ENCODE measurements at regions of chr17 and their contacts with region 1.

Region 1: GRCh38 chr17:32486111-32486700 is 587 bp upstream of the CDK5R1 start:
- DNase-seq: peak; percentile 60
- H3K4me3 Mint-ChIP-seq: peak overlapping the region; percentile 79
- H3K27ac Mint-ChIP-seq: peak overlapping the region; percentile 65
- H3K4me1 Mint-ChIP-seq: peaks cover 20% of the 10 kb centered on the region
- H3K27me3 Mint-ChIP-seq: peaks cover 3% of the 10 kb centered on the region

Region 2: GRCh38 chr17:31845291-31845690 is 640.9 kb before region 1 on chr17:
- intact Hi-C with region 1: no loop called
- DNase-seq: no peak
- H3K4me3 Mint-ChIP-seq: no peak overlapping the region
- H3K27ac Mint-ChIP-seq: no peak overlapping the region
- H3K4me1 Mint-ChIP-seq: no peaks in the 10 kb centered on the region
- H3K27me3 Mint-ChIP-seq: peaks cover 6% of the 10 kb centered on the region

Region 3: DNA sequence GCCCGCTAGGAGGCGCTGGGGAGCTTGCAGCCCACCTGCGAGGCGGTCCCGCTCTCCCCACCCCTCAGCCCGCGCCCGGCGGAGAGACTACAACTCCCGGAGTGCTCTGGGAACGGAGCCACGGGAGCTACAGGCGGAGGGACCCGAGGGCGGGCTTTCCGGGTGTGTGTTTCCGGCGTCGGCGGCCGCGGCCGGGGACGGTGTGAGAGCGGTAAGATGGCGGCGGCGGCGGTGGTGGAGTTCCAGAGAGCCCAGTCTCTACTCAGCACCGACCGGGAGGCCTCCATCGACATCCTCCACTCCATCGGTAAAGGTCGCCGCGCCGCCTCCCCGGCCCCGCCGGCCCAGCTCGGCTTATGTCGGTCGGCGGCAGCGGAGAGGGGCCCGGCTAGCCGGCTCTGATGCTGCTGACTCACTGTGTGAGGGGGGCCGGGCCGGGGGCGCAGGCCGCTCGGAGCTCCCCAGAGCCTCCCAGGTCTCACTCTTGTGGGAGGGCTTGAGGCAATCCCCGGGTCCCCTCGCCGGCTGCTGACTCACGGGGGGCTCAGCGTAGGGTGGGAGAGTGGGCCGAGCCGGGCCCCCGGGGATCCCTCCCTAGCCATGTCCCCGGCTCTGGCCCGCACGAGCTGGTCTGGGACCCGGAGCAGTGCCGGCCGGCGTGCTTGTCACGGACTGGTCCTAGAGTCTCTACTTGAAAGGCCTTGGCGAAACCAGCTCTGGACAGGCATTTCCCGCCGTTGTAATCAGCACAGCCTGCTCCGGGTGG is 41.7 kb before region 1 on chr17 and contains the start of gene PSMD11:
- intact Hi-C with region 1: loop called (anchors 1 kb)
- DNase-seq: peak; percentile 98
- H3K4me3 Mint-ChIP-seq: peak within 1 kb of the TSS; percentile 94
- H3K27ac Mint-ChIP-seq: peak within 1 kb of the TSS; percentile 88
- H3K4me1 Mint-ChIP-seq: peaks cover 28% of the 10 kb centered on the region
- H3K27me3 Mint-ChIP-seq: peaks cover 5% of the 10 kb centered on the region
- total RNA-seq, gene PSMD11: 190 and 198 TPM in 2 replicates

Region 4: GRCh38 chr17:32461853-32462617 is 24.2 kb before region 1 on chr17:
- intact Hi-C with region 1: loop called (anchors 2 kb)
- DNase-seq: peak; percentile 45
- H3K4me3 Mint-ChIP-seq: no peak overlapping the region
- H3K27ac Mint-ChIP-seq: no peak overlapping the region
- H3K4me1 Mint-ChIP-seq: peaks cover 27% of the 10 kb centered on the region
- H3K27me3 Mint-ChIP-seq: no peaks in the 10 kb centered on the region

Region 5: DNA sequence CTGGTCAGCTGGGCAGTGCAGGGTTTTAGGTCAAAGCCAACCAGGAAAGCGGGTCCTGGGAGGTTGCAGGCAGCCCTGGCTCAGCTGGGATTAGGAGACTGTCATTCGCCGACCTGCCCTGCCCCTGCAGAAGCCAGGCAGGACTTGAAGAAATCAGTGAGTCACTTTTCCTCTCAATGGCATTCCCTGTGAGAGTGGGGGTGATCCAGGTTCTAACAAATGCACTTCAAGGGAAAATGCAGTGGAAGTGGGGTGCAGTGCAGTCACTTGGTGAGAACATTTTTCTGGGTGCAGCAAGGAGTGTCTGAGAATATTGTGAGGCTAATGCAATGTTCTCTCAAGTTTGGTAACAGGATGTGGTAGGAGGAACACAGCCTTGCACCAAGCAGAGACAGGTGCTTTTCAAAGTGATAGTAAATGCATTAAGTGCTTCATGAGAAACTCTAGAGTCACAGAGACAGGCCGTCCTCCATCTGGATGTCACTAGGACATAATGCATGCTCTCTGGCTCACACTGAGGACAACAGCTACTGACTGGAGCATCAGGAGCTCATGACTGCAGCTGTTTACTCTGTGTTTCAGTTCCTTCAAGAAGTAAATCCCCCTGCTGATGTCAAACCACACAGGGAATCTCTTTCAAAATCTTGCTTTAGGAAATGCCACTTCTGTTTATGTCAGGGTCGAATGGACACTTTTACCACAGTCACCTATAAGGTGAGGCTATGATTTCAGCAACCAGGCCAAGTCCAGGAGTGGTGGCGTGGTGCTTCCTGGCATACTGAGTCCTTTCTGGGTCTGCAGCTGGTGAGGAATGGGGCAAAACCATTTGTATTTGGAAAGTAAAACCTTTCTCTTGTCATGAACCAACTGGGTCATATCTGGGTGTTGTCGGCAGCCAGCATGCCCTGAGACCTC is 17.3 kb after region 1 on chr17:
- intact Hi-C with region 1: loop called (anchors 1 kb)
- DNase-seq: peak; percentile 52
- H3K4me3 Mint-ChIP-seq: peak overlapping the region; percentile 63
- H3K27ac Mint-ChIP-seq: peak overlapping the region; percentile 92
- H3K4me1 Mint-ChIP-seq: peaks cover 42% of the 10 kb centered on the region
- H3K27me3 Mint-ChIP-seq: peaks cover 4% of the 10 kb centered on the region

Region 6: DNA sequence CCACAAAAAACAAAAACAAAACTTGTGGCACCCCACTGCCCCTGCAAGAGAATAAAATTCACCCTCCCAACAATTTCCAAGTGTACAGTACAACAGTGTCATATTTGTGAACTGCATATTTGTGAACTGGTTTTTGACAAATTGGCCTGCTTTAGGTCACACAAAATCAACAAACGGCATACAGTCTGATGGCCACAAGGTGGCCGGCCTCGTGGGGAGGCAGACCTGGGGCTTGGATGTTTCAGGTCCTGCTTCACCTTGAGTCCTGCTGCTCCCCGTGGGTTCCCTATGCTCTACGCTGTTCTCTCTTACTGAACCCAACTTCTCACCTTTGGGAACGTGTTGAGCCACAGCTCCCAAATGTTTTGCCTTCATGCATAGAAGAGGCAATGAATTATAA is 102.8 kb after region 1 on chr17:
- intact Hi-C with region 1: no loop called
- DNase-seq: no peak
- H3K4me3 Mint-ChIP-seq: no peak overlapping the region
- H3K27ac Mint-ChIP-seq: no peak overlapping the region
- H3K4me1 Mint-ChIP-seq: no peaks in the 10 kb centered on the region
- H3K27me3 Mint-ChIP-seq: peaks cover 7% of the 10 kb centered on the region

Region 7: GRCh38 chr17:32609085-32609484 is 122.9 kb after region 1 on chr17:
- intact Hi-C with region 1: loop called (anchors 1 kb)
- DNase-seq: peak; percentile 37
- H3K4me3 Mint-ChIP-seq: no peak overlapping the region
- H3K27ac Mint-ChIP-seq: no peak overlapping the region
- H3K4me1 Mint-ChIP-seq: peaks cover 7% of the 10 kb centered on the region
- H3K27me3 Mint-ChIP-seq: peaks cover 5% of the 10 kb centered on the region

Region 8: DNA sequence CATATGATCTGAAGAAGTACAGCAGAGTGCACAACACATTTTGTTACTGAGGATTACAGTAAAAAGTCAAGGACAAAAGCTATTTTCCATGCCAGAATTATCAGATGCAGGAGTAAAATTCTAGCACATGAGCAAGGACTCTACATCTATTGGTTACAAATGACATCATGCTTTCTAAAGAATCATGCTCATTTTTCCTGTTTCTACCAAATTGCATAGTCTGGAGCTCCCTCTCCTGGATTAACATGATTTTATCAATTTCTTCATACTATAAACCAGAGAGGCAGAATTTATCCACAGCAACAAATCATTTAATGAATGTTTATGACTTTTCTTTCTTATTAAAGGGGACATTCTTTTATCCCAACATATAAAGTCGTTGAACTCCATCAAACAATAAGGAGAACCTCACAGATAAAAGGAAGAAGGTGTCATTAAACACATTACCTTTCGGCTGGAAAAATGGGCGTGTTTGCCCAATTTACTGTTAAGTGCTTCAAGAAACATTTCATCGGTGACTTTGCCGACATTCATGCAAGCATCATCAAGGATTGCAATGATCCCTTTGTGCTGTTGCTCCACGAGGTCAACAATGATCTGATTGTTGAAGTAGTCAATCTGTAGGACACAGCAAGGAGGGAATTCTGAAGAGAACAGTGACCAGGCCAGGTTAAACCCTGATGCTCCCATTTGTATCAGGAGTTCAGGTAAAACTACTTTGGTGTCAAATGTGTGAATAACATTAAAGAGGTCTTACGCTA is 269.0 kb after region 1 on chr17:
- intact Hi-C with region 1: loop called (anchors 1 kb)
- DNase-seq: no peak
- H3K4me3 Mint-ChIP-seq: no peak overlapping the region
- H3K27ac Mint-ChIP-seq: no peak overlapping the region
- H3K4me1 Mint-ChIP-seq: peaks cover 5% of the 10 kb centered on the region
- H3K27me3 Mint-ChIP-seq: peaks cover 3% of the 10 kb centered on the region

Region 9: GRCh38 chr17:32877164-32877764 is 391.1 kb after region 1 on chr17:
- intact Hi-C with region 1: loop called (anchors 10 kb)
- DNase-seq: peak; percentile 92
- H3K4me3 Mint-ChIP-seq: peak overlapping the region; percentile 66
- H3K27ac Mint-ChIP-seq: peak overlapping the region; percentile 37
- H3K4me1 Mint-ChIP-seq: peaks cover 21% of the 10 kb centered on the region
- H3K27me3 Mint-ChIP-seq: peaks cover 18% of the 10 kb centered on the region